ENCODE measurements at regions of chr5 and their contacts with region 1.

Region 1: GRCh38 chr5:61162010-61162831 is at the start of gene SMIM15:
- DNase-seq: peak; percentile 95
- H3K4me3 ChIP-seq: peak within 1 kb of the TSS; percentile 76 to 92 (median 83)
- H3K27ac ChIP-seq: peak within 1 kb of the TSS; percentile 85 to 92 (median 88)
- H3K4me1 ChIP-seq: peaks cover 11 to 40% (median 30%) of the 10 kb centered on the region in 4 donors
- H3K27me3 ChIP-seq: no peaks in the 10 kb centered on the region
- CTCF ChIP-seq: peak in 1 of 3 experiments; percentile 3
- EP300 ChIP-seq: no peak
- POLR2A ChIP-seq: peak; percentile 14
- total RNA-seq, gene SMIM15: 17.0 to 29.6 (median 26.6) TPM

Region 2: GRCh38 chr5:60960591-60960990 is 201.6 kb before region 1 on chr5:
- intact Hi-C with region 1: loop called (anchors 5 kb)
- DNase-seq: no peak
- H3K4me3 ChIP-seq: no peak overlapping the region
- H3K27ac ChIP-seq: no peak overlapping the region
- H3K4me1 ChIP-seq: peaks cover 0 to 5% (median 0%) of the 10 kb centered on the region in 4 donors
- H3K27me3 ChIP-seq: no peaks in the 10 kb centered on the region
- CTCF ChIP-seq: peak in 2 of 3 experiments; percentile 13 to 42
- EP300 ChIP-seq: no peak
- POLR2A ChIP-seq: no peak

Region 3: GRCh38 chr5:61082516-61083280 is 79.5 kb before region 1 on chr5:
- intact Hi-C with region 1: no loop called
- DNase-seq: no peak
- H3K4me3 ChIP-seq: no peak overlapping the region
- H3K27ac ChIP-seq: no peak overlapping the region
- H3K4me1 ChIP-seq: no peaks in the 10 kb centered on the region
- H3K27me3 ChIP-seq: no peaks in the 10 kb centered on the region
- CTCF ChIP-seq: no peak
- EP300 ChIP-seq: no peak
- POLR2A ChIP-seq: no peak

Measured in esophagus muscularis mucosa (tissue), 4 donors.